ENCODE measurements at regions of chr14 and their contacts with region 1.

Region 1: GRCh38 chr14:72830786-72831594 is 62.9 kb downstream of the DPF3 start:
- DNase-seq: no peak
- ATAC-seq: no peak
- H3K4me3 ChIP-seq: no peak overlapping the region
- H3K27ac ChIP-seq: no peak overlapping the region
- H3K4me1 ChIP-seq: no peaks in the 10 kb centered on the region
- H3K27me3 ChIP-seq: no peaks in the 10 kb centered on the region
- CTCF ChIP-seq: no peak

Region 2: DNA sequence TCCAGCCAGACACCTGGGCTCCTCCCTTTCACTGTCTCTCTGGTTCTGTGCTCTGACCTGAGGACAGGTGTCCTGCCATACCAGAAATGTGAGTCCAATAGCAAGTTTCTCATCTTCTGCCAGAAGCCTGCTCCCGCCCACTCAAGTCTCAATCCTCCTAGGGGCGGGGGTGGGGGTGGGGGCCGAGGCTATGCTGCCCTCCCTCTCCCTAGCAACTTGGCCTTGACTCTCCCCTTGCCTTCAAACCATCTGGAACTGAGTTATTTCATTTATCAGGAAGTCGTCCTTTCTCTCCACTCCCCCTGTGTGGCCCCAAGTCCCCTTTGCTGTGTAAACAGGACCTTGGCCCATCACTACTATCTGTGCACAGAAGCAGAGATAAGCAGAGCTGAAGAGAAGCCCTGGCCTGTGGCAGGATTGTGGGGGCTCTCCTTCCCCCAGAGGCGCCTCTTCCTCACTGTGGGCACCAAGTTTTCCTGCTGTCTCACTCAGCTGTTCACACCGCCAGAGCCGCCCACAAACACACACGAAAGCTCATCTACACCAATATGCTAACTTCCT is 54.2 kb before region 1 on chr14:
- CTCF ChIA-PET with region 1: no interaction called
- POLR2A ChIA-PET with region 1: no interaction called
- intact Hi-C with region 1: no loop called
- DNase-seq: no peak
- ATAC-seq: no peak
- H3K4me3 ChIP-seq: no peak overlapping the region
- H3K27ac ChIP-seq: no peak overlapping the region
- H3K4me1 ChIP-seq: peaks cover 4% of the 10 kb centered on the region; the same call in 1 of the 2 replicates
- H3K27me3 ChIP-seq: no peaks in the 10 kb centered on the region
- CTCF ChIP-seq: no peak

Region 3: DNA sequence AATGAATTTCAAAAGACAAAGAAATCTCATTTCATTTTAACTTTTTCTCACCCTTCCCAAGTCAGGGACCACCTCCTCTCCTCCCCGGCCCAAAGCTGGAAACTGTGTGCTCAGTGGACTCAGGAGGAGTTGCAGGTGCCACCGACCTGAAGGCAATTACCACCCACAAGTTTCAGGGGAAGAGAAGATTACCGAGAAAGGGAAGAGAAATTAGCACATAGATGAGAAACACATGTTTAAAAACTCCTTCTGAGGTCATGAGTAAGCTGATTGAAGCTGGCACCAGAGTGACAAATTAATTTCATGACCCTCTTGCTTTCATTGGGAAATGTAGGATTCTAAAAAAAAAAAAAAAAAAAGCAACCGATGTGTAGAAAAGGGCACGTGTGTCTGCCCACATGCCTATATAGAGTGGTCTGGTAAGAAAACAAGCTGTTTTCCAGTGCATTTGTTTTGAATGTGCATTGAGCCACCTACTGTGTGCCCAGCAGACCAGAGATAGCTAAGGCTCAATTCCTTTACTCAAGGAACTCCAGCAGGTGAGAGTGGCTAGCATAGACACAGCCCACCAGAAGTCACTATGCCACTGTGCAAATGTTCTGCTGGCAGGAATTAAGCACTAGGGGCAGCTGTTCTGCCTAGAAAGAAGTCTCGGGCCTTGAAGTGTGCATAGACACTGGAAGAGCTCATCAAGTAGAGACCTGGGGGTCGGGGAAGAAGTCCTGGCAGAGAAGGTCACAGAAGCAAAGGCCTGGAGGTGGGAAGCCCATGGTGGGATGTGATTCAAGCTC is 32.4 kb after region 1 on chr14:
- CTCF ChIA-PET with region 1: no interaction called
- POLR2A ChIA-PET with region 1: interaction called, 15 read pairs
- intact Hi-C with region 1: no loop called
- DNase-seq: no peak
- ATAC-seq: no peak
- H3K4me3 ChIP-seq: no peak overlapping the region
- H3K27ac ChIP-seq: no peak overlapping the region
- H3K4me1 ChIP-seq: no peaks in the 10 kb centered on the region
- H3K27me3 ChIP-seq: no peaks in the 10 kb centered on the region
- CTCF ChIP-seq: no peak

Region 4: GRCh38 chr14:72883961-72884360 is 53.0 kb after region 1 on chr14:
- CTCF ChIA-PET with region 1: no interaction called
- POLR2A ChIA-PET with region 1: interaction called, 19 read pairs
- intact Hi-C with region 1: no loop called
- DNase-seq: peak; percentile 93
- ATAC-seq: peak; percentile 92
- H3K4me3 ChIP-seq: no peak overlapping the region
- H3K27ac ChIP-seq: peak overlapping the region; percentile 97
- H3K4me1 ChIP-seq: peaks cover 23% of the 10 kb centered on the region
- H3K27me3 ChIP-seq: no peaks in the 10 kb centered on the region
- CTCF ChIP-seq: no peak

Measured in PC-3 (cell line).